ENCODE measurements at regions of chr11 and their contacts with region 1.

Region 1: DNA sequence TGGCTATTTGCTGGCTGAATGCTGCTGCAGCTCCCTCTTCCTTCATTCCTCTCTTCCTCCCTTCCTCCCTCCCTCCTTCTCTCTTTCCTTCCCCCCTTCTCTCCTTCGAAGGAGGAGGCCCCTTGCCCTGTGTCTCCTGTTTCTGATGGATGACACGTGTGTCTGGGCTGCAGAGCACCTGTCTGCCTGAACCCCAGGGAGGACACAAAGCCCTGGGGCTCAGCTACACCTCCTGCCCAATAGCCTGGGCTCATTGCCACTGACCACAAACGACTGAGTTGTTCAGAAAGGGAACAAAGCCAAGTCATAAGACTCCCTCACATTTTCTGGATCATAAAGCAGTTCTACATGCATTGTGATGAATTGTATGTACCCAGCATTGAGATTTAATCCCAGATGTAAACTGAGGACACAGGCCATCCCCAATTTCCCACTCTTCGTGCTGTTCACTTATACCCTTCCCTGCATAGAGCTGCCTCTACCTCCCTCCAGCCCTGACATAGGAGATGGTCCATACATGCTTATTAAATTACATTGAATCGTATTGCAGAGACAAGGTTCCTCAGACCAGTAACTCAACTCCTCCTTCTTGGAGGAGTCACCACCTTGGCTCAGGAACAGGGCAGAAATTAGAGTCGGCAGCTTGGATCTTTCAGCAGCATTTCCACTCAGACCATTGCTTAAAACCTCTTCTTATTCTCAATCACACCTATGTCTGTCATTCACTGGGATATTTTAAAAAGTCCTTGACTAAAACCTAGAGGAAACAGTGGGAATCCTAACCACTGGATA is 1.2 kb downstream of the CSRP3 start:
- DNase-seq: no peak
- ATAC-seq: peak in 4 of 8 donors; percentile 1 to 23 (median 16)
- H3K4me3 ChIP-seq: peak overlapping the region; percentile 11 to 61 (median 53)
- H3K27ac ChIP-seq: peak overlapping the region; percentile 36 to 95 (median 88)
- H3K4me1 ChIP-seq: peaks cover 0 to 15% (median 0%) of the 10 kb centered on the region in 9 donors
- H3K27me3 ChIP-seq: no peaks in the 10 kb centered on the region
- CTCF ChIP-seq: no peak

Region 2: DNA sequence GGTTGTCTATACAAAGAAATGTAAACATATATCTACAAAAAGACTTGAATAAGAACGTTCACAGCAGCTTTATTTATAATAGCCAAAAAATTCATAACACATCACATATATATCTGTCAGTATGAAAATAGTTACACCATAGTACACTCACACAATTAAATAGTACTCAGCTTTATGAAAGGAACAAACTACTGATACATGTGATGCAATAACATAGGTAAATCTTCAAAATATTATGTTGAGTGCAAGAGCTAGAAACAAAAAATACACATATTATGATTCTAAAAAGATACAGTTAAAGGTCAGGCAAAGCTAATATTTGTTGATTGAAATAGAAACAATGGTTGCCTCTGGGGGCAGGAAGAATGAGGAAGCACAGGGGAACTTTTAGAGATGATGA is 146.7 kb before region 1 on chr11:
- intact Hi-C with region 1: loop called in 1 of 10 experiments (anchors 5 kb)
- DNase-seq: no peak
- ATAC-seq: no peak
- H3K4me3 ChIP-seq: no peak overlapping the region
- H3K27ac ChIP-seq: no peak overlapping the region
- H3K4me1 ChIP-seq: no peaks in the 10 kb centered on the region
- H3K27me3 ChIP-seq: no peaks in the 10 kb centered on the region
- CTCF ChIP-seq: no peak

Region 3: DNA sequence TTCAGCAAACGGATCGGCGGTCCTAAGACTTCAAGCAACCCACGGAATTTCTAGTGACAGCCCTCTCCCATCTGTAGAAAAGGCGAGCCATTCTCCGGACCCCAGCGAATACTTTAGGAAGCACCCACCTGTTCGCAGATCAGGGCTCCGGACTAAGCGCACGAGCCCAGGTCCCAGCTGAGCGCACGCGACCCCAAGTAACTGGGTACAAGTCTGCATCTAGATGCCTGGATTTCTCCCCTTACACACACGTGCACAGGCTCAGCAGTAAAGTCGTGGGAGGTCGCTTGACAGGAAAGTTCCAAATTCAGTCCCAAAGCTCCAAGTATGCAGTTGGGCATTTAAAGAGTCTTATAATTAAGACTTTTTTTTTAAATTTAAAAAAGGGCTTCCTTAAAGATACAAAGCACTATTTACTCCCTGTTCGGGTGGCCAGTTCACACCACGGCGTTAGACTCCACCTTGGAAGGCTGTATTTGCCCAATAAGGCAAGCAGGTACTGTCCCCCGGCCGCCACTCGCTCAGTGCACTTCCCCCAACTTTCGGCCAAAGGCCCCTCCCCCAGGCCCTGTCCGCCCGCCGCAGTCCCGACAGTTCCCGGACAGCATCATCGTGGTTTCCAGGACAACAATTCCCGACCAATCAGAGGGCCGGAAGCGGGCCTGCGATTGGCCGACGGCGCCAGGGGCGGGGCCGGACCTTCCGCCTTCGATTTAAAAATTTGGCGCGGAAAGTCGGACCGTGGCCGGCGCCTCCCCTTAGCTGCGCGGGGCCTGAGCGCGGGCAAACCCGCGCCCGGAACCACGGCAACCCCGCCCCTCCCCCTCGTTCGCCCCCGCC is 40.0 kb after region 1 on chr11 and contains the start of gene E2F8:
- intact Hi-C with region 1: loop called in 3 of 10 experiments (anchors 5 kb)
- DNase-seq: peak; percentile 92 to 96
- ATAC-seq: peak; percentile 93 to 98 (median 96)
- H3K4me3 ChIP-seq: peak within 1 kb of the TSS; percentile 46 to 74 (median 68)
- H3K27ac ChIP-seq: peak within 1 kb of the TSS in 7 of 10 donors; percentile 29 to 68 (median 56)
- H3K4me1 ChIP-seq: peaks cover 5 to 49% (median 17%) of the 10 kb centered on the region in 9 donors
- H3K27me3 ChIP-seq: peaks cover 11 to 52% (median 32%) of the 10 kb centered on the region in 7 donors
- CTCF ChIP-seq: no peak
- total RNA-seq, gene E2F8: 0.86 to 5.0 (median 3.7) TPM